ENCODE measurements at regions of chr2 and their contacts with region 1.

Region 1: GRCh38 chr2:85551698-85552678 is 9.3 kb downstream of the GGCX start:
- DNase-seq: peak; percentile 90
- ATAC-seq: peak; percentile 97
- H3K4me3 ChIP-seq: no peak overlapping the region
- H3K4me3 Mint-ChIP-seq: no peak overlapping the region
- H3K27ac ChIP-seq: no peak overlapping the region
- H3K27ac Mint-ChIP-seq: peak overlapping the region; percentile 81
- H3K4me1 ChIP-seq: peaks cover 0 to 3% of the 10 kb centered on the region in 2 donors
- H3K4me1 Mint-ChIP-seq: peaks cover 4% of the 10 kb centered on the region
- H3K27me3 ChIP-seq: no peaks in the 10 kb centered on the region
- H3K27me3 Mint-ChIP-seq: no peaks in the 10 kb centered on the region
- CTCF ChIP-seq: peak; percentile 91

Region 2: DNA sequence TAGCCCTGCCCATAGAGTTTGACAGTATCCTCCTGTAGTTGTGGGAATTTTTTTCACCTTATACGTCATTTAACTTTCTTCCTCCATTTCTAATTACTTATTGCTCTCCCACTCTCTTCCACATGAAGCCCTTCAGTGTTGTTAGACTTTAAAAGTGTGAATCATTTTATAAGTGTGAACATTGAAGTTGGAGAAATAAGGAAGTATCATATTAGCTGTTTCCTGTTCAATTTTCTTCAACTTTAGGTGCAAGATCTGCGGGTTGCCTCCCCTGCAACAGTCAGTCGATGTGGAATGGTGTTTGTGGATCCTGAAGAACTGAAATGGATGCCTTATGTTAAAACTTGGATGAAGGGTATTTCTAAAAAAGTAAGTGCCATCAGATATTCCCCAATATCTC is 897.6 kb before region 1 on chr2:
- CTCF ChIA-PET with region 1: no interaction called
- POLR2A ChIA-PET with region 1: no interaction called
- intact Hi-C with region 1: no loop called
- DNase-seq: no peak
- ATAC-seq: no peak
- H3K4me3 ChIP-seq: no peak overlapping the region
- H3K4me3 Mint-ChIP-seq: no peak overlapping the region
- H3K27ac ChIP-seq: no peak overlapping the region
- H3K27ac Mint-ChIP-seq: no peak overlapping the region
- H3K4me1 ChIP-seq: no peaks in the 10 kb centered on the region
- H3K4me1 Mint-ChIP-seq: no peaks in the 10 kb centered on the region
- H3K27me3 ChIP-seq: peaks cover 0 to 5% (median 0%) of the 10 kb centered on the region in 4 experiments
- H3K27me3 Mint-ChIP-seq: peaks cover 17% of the 10 kb centered on the region
- CTCF ChIP-seq: no peak

Region 3: GRCh38 chr2:85354286-85355072 is 197.5 kb before region 1 on chr2 and contains the starts of genes ELMOD3 and RETSAT:
- CTCF ChIA-PET with region 1: interaction called, 5 read pairs
- POLR2A ChIA-PET with region 1: no interaction called
- intact Hi-C with region 1: loop called (anchors 2 kb)
- DNase-seq: peak; percentile 98
- ATAC-seq: peak; percentile 99
- H3K4me3 ChIP-seq: peak within 1 kb of the TSS; percentile 60 to 100 (median 85)
- H3K4me3 Mint-ChIP-seq: peak within 1 kb of the TSS; percentile 95
- H3K27ac ChIP-seq: peak within 1 kb of the TSS; percentile 81 to 95
- H3K27ac Mint-ChIP-seq: peak within 1 kb of the TSS; percentile 95
- H3K4me1 ChIP-seq: peaks cover 19 to 26% of the 10 kb centered on the region in 2 donors
- H3K4me1 Mint-ChIP-seq: peaks cover 40% of the 10 kb centered on the region
- H3K27me3 ChIP-seq: no peaks in the 10 kb centered on the region
- H3K27me3 Mint-ChIP-seq: no peaks in the 10 kb centered on the region
- CTCF ChIP-seq: no peak
- total RNA-seq, gene ELMOD3: 34.0 and 34.3 TPM in 2 replicates
- total RNA-seq, gene RETSAT: 23.8 and 28.1 TPM in 2 replicates

Region 4: DNA sequence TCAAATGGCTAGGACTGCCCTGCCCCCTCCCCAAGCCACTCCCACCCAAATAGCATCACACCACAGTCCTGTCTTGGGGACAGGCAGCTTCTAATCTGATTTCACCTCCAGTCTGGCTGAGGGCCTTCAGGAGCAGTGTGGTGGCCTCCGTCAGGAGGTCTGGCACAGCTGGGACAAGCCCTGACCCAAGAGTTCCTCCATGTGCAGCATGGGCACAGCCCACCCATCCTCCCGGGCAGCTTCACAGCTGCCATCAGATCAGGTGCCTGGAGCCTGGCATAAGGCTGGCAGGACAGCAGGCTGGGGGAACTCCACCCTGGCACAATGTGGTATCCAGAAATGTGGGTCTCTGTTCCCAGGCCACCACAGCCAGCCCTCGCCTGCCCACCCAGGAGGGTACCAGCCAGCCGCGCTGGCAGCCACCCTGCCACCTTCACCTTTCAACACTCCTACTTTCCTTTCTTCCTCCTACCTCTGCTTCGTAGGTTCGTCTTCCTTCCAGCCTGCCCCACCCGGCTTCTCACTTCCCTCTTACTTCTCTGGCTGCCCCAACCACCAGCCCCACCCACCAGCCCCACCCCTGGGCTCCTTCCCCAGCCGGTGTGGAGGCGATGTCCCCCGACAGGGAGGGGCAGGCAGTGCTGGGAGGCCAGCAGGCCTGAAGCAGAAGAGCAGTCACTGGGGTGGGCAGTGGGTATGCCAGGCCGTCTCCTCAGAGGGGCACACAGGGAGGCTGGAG is 142.0 kb before region 1 on chr2 and contains the start of gene CAPG:
- CTCF ChIA-PET with region 1: interaction called, 17 read pairs
- POLR2A ChIA-PET with region 1: interaction called, 3 read pairs
- intact Hi-C with region 1: no loop called
- DNase-seq: peak; percentile 82
- ATAC-seq: peak; percentile 78
- H3K4me3 ChIP-seq: peak within 1 kb of the TSS; percentile 43 to 75 (median 57)
- H3K4me3 Mint-ChIP-seq: peak within 1 kb of the TSS; percentile 90
- H3K27ac ChIP-seq: peak within 1 kb of the TSS; percentile 71 to 84
- H3K27ac Mint-ChIP-seq: peak within 1 kb of the TSS; percentile 91
- H3K4me1 ChIP-seq: peaks cover 73 to 84% of the 10 kb centered on the region in 2 donors
- H3K4me1 Mint-ChIP-seq: peaks cover 76% of the 10 kb centered on the region
- H3K27me3 ChIP-seq: no peaks in the 10 kb centered on the region
- H3K27me3 Mint-ChIP-seq: no peaks in the 10 kb centered on the region
- CTCF ChIP-seq: no peak
- total RNA-seq, gene CAPG: 179 and 210 TPM in 2 replicates

Region 5: GRCh38 chr2:85595301-85596025 is 43.5 kb after region 1 on chr2 and contains the start of gene RNF181:
- CTCF ChIA-PET with region 1: interaction called, 21 read pairs
- POLR2A ChIA-PET with region 1: interaction called, 4 read pairs
- intact Hi-C with region 1: no loop called
- DNase-seq: peak; percentile 94
- ATAC-seq: peak; percentile 100
- H3K4me3 ChIP-seq: peak within 1 kb of the TSS; percentile 65 to 93 (median 86)
- H3K4me3 Mint-ChIP-seq: peak within 1 kb of the TSS; percentile 92
- H3K27ac ChIP-seq: peak within 1 kb of the TSS; percentile 76 to 81
- H3K27ac Mint-ChIP-seq: peak within 1 kb of the TSS; percentile 95
- H3K4me1 ChIP-seq: peaks cover 17 to 23% of the 10 kb centered on the region in 2 donors
- H3K4me1 Mint-ChIP-seq: peaks cover 29% of the 10 kb centered on the region
- H3K27me3 ChIP-seq: no peaks in the 10 kb centered on the region
- H3K27me3 Mint-ChIP-seq: no peaks in the 10 kb centered on the region
- CTCF ChIP-seq: no peak
- total RNA-seq, gene RNF181: 67.3 and 76.6 TPM in 2 replicates

Region 6: GRCh38 chr2:85662899-85663593 is 111.1 kb after region 1 on chr2:
- CTCF ChIA-PET with region 1: no interaction called
- POLR2A ChIA-PET with region 1: no interaction called
- intact Hi-C with region 1: no loop called
- DNase-seq: no peak
- ATAC-seq: no peak
- H3K4me3 ChIP-seq: no peak overlapping the region
- H3K4me3 Mint-ChIP-seq: no peak overlapping the region
- H3K27ac ChIP-seq: no peak overlapping the region
- H3K27ac Mint-ChIP-seq: no peak overlapping the region
- H3K4me1 ChIP-seq: no peaks in the 10 kb centered on the region
- H3K4me1 Mint-ChIP-seq: no peaks in the 10 kb centered on the region
- H3K27me3 ChIP-seq: peaks cover 0 to 2% (median 0%) of the 10 kb centered on the region in 4 experiments
- H3K27me3 Mint-ChIP-seq: no peaks in the 10 kb centered on the region
- CTCF ChIP-seq: no peak